ENCODE measurements at regions of chr4 and their contacts with region 1.

Region 1: DNA sequence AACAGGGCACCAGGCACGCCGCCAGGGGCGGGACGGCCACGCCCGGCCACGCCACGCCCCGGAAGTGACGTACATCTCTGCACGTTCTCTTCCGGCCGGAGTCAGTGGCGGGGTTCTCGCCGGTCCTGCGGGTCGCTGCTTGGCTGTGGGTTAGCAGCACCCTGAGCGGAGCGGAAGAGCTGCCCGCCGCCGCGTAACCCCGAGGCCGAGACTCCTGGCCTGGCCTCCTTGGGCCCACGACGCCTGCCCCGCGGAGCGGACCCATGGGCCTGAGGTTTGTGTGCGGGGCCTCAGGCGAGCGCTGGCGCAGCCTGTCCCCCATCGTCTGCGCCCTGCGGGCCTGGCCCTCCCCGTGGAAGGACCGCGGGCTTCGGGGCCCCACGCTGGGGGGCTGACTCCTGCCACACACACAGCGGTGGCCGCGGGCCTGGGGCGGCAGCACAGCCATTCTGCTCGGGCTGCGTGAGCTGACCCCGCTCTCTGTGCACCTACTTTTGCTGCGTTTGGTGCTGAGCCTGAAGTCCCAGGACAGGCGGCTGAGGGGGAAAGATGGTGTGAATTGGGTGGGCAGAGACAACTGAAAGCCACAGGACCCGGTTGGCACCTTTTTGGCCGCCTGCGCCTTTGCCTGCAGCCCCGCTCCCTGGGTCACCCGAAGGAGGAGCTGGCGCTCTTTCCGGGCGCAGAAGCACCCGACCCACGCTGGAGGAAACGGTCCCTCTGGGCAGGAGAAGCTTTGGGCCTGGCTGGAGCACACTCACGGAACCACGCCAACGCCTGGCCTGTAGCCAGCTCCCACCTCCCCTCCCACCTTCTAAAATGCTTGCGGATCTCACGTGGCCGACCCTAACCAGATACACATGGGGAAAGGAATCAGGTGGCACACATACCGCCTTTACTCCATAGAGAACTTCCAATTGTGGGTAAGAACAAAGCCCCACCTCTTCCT is 28.1 kb downstream of the NOP14 start:
- DNase-seq: peak; percentile 98
- H3K4me3 ChIP-seq: peak overlapping the region; percentile 64 to 95 (median 82)
- H3K27ac ChIP-seq: peak overlapping the region; percentile 90 to 97 (median 92)
- H3K4me1 ChIP-seq: peaks cover 11 to 51% (median 35%) of the 10 kb centered on the region in 4 donors
- H3K27me3 ChIP-seq: no peaks in the 10 kb centered on the region
- CTCF ChIP-seq: no peak
- EP300 ChIP-seq: no peak
- POLR2A ChIP-seq: peak; percentile 97

Region 2: GRCh38 chr4:2755837-2756694 is 179.0 kb before region 1 on chr4 and contains the start of gene TNIP2:
- in situ Hi-C with region 1: loop called in 3 of 4 experiments (anchors 10 to 25 kb)
- intact Hi-C with region 1: loop called (anchors 5 kb)
- DNase-seq: peak; percentile 92
- H3K4me3 ChIP-seq: peak within 1 kb of the TSS; percentile 53 to 86 (median 68)
- H3K27ac ChIP-seq: peak within 1 kb of the TSS; percentile 89 to 97 (median 90)
- H3K4me1 ChIP-seq: peaks cover 18 to 57% (median 35%) of the 10 kb centered on the region in 4 donors
- H3K27me3 ChIP-seq: no peaks in the 10 kb centered on the region
- CTCF ChIP-seq: peak in 4 of 5 experiments; percentile 27 to 79 (median 38)
- EP300 ChIP-seq: no peak
- POLR2A ChIP-seq: peak; percentile 56
- total RNA-seq, gene TNIP2: 91.8 to 203 (median 129) TPM

Region 3: DNA sequence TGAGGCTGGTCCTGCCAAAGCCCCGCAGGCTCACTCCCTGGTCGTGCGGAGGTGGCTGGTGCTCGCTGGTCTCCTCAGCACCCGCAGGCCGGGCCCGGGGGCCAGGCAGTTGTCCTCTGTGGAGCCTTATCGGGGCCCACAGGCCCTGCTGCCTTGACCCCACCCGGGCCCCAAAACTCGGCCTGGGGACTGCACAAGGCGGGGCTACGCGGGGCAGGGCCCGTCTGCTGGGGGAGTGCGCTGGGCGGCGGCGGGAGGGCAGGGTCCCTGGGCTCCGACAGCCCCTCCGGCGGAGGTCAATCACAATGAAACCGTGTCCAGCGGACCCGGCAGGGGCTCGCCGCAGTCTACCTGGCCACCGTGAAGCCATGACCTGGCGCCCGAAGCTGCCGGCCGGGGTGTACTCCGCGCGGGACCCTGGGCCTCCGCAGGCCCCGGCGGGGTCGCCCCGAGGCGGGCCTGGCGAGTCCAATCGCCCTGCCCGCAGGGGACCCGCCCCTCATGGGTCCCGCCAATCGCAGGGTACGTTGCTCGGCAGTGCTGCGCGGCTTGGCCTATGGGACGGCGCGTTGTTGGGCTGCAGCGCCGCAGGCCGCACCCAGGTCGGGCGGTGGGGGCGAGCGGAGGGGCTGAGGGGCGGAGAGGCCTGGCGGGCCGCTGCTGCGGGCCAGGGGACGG is 91.7 kb before region 1 on chr4 and contains the start of gene ADD1:
- in situ Hi-C with region 1: no loop called
- intact Hi-C with region 1: loop called (anchors 5 kb)
- DNase-seq: peak; percentile 95
- H3K4me3 ChIP-seq: peak within 1 kb of the TSS; percentile 78 to 98 (median 84)
- H3K27ac ChIP-seq: peak within 1 kb of the TSS; percentile 90 to 95 (median 94)
- H3K4me1 ChIP-seq: peaks cover 18 to 48% (median 27%) of the 10 kb centered on the region in 4 donors
- H3K27me3 ChIP-seq: no peaks in the 10 kb centered on the region
- CTCF ChIP-seq: no peak
- EP300 ChIP-seq: no peak
- POLR2A ChIP-seq: peak; percentile 92
- total RNA-seq, gene ADD1: 218 to 392 (median 299) TPM